HepG2 (cell line): ENCODE measurements at regions of chr19 and their contacts with region 1.

Region 1: DNA sequence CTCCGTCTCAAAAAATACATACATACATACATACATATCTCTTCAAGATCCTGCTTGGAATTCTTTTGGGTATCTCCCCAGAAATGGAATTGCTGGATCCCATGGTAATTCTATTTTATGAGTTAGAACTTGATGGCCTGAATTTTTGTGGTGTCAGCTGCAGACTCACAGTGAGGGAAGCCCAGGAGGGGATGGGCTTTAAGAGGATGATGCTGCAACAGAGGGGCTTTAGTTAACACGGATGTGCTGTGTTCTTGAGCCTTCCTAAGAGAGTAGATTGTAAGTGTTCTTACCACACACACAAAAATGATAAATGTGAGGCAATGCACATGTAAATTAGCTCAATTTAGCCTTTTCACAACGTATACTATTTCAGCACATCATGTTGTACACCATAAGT is 31.8 kb downstream of the CACNG6 start:
- DNase-seq: no peak
- ATAC-seq: no peak
- H3K4me3 ChIP-seq: no peak overlapping the region
- H3K27ac ChIP-seq: no peak overlapping the region
- H3K4me1 ChIP-seq: peaks cover 43% of the 10 kb centered on the region
- H3K27me3 ChIP-seq: no peaks in the 10 kb centered on the region
- CTCF ChIP-seq: no peak
- EP300 ChIP-seq: no peak
- POLR2A ChIP-seq: no peak
- RAD21 ChIP-seq: no peak

Region 2: GRCh38 chr19:53808710-53809125 is 214.5 kb before region 1 on chr19:
- CTCF ChIA-PET with region 1: interaction called, 11 read pairs
- POLR2A ChIA-PET with region 1: no interaction called
- in situ Hi-C with region 1: loop called (anchors 10 kb)
- intact Hi-C with region 1: no loop called
- DNase-seq: peak; percentile 68
- ATAC-seq: peak; percentile 88
- H3K4me3 ChIP-seq: no peak overlapping the region
- H3K27ac ChIP-seq: no peak overlapping the region
- H3K4me1 ChIP-seq: peaks cover 24% of the 10 kb centered on the region
- H3K27me3 ChIP-seq: peaks cover 0 to 1% of the 10 kb centered on the region in 2 experiments; a peak in 1 of 5 replicates
- CTCF ChIP-seq: peak; percentile 84
- EP300 ChIP-seq: no peak
- POLR2A ChIP-seq: no peak
- RAD21 ChIP-seq: peak; percentile 50; the same call in 1 of the 2 replicates

Region 3: GRCh38 chr19:53906211-53907192 is 116.7 kb before region 1 on chr19:
- CTCF ChIA-PET with region 1: no interaction called
- POLR2A ChIA-PET with region 1: no interaction called
- in situ Hi-C with region 1: loop called (anchors 10 kb)
- intact Hi-C with region 1: loop called (anchors 5 kb)
- DNase-seq: no peak
- ATAC-seq: peak; percentile 69
- H3K4me3 ChIP-seq: no peak overlapping the region
- H3K27ac ChIP-seq: no peak overlapping the region
- H3K4me1 ChIP-seq: no peaks in the 10 kb centered on the region
- H3K27me3 ChIP-seq: peaks cover 13 to 35% of the 10 kb centered on the region in 2 experiments
- CTCF ChIP-seq: peak; percentile 80
- EP300 ChIP-seq: no peak
- POLR2A ChIP-seq: no peak
- RAD21 ChIP-seq: no peak

Region 4: GRCh38 chr19:54364775-54365257 is 341.6 kb after region 1 on chr19 and contains the start of gene LAIR1:
- CTCF ChIA-PET with region 1: no interaction called
- POLR2A ChIA-PET with region 1: no interaction called
- in situ Hi-C with region 1: no loop called
- intact Hi-C with region 1: no loop called
- DNase-seq: no peak
- ATAC-seq: peak; percentile 66
- H3K4me3 ChIP-seq: peak within 1 kb of the TSS in 1 of 3 experiments; percentile 27; a peak in 2 of 6 replicates
- H3K27ac ChIP-seq: no peak within 1 kb of the TSS
- H3K4me1 ChIP-seq: peaks cover 27% of the 10 kb centered on the region
- H3K27me3 ChIP-seq: no peaks in the 10 kb centered on the region; a peak in 1 of 5 replicates
- CTCF ChIP-seq: no peak
- EP300 ChIP-seq: no peak
- POLR2A ChIP-seq: no peak
- RAD21 ChIP-seq: no peak
- total RNA-seq, gene LAIR1: 0.70 and 1.2 TPM in 2 replicates